K562 (cell line): ENCODE measurements at regions of chr20 and their contacts with region 1.

Region 1: GRCh38 chr20:645318-646106 is 7.5 kb downstream of the SRXN1 start:
- DNase-seq: peak; percentile 57 to 82 (median 70)
- ATAC-seq: peak; percentile 87
- H3K4me3 ChIP-seq: no peak overlapping the region
- H3K27ac ChIP-seq: peak overlapping the region; percentile 67; the same call in 2 of the 3 replicates
- H3K4me1 ChIP-seq: peaks cover 18 to 19% of the 10 kb centered on the region in 2 experiments; a peak in 4 of 5 replicates
- H3K27me3 ChIP-seq: no peaks in the 10 kb centered on the region
- CTCF ChIP-seq: peak; percentile 83 to 90 (median 87)
- EP300 ChIP-seq: no peak
- POLR2A ChIP-seq: 0 out of 2 replicates have a peak, but pooled peaks have one; percentile 37
- RAD21 ChIP-seq: peak; percentile 85 to 86

Region 2: GRCh38 chr20:555933-556526 is 89.5 kb before region 1 on chr20:
- CTCF ChIA-PET with region 1: interaction called, 17 read pairs
- POLR2A ChIA-PET with region 1: interaction called, 3 read pairs
- in situ Hi-C with region 1: loop called (anchors 5 kb)
- intact Hi-C with region 1: loop called (anchors 1 kb)
- DNase-seq: peak; percentile 40 to 75 (median 44)
- ATAC-seq: peak; percentile 83
- H3K4me3 ChIP-seq: no peak overlapping the region
- H3K27ac ChIP-seq: no peak overlapping the region
- H3K4me1 ChIP-seq: peaks cover 0 to 10% of the 10 kb centered on the region in 2 experiments; a peak in 2 of 5 replicates
- H3K27me3 ChIP-seq: no peaks in the 10 kb centered on the region
- CTCF ChIP-seq: no peak; a peak in 1 of 6 replicates
- EP300 ChIP-seq: peak; percentile 8; the same call in 1 of the 2 replicates
- POLR2A ChIP-seq: no peak
- RAD21 ChIP-seq: no peak

Region 3: DNA sequence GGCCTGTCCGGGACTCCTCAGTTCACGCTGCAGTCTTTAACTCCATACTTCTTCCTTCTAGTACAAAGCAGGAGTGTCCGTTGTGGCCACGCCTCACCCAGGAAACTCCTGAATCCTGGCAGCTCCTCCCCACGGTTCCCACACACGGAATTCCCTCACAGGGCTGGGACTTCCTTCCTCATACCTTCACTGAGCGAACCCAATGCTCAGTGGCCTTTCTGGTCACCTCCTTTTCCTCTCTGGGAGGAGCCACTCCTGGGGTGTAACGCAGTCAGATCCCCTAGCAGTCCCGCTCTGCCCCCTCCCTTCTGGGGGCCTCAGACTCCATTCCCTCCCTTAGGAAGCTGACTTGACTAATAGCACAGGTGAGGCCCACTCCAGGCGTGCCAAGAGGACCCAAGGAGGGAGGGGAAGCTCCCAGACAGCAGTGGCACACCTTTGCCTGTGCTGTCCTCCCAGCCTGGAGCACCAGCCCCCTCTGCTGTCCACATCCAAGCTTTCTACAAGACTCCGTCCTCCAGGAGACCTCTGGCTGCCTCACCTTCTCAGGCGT is 123.0 kb after region 1 on chr20 and contains the start of gene SLC52A3:
- CTCF ChIA-PET with region 1: no interaction called
- POLR2A ChIA-PET with region 1: no interaction called
- in situ Hi-C with region 1: no loop called
- intact Hi-C with region 1: no loop called
- DNase-seq: peak; percentile 45 to 62 (median 54)
- ATAC-seq: peak; percentile 96
- H3K4me3 ChIP-seq: no peak within 1 kb of the TSS
- H3K27ac ChIP-seq: no peak within 1 kb of the TSS
- H3K4me1 ChIP-seq: peaks cover 0 to 3% of the 10 kb centered on the region in 2 experiments; a peak in 4 of 5 replicates
- H3K27me3 ChIP-seq: peaks cover 0 to 7% of the 10 kb centered on the region in 2 experiments; a peak in 2 of 5 replicates
- CTCF ChIP-seq: peak; percentile 71 to 76 (median 74)
- EP300 ChIP-seq: no peak
- POLR2A ChIP-seq: no peak
- RAD21 ChIP-seq: peak; percentile 42 to 68; a peak in 3 of 4 replicates
- polyA plus RNA-seq, gene SLC52A3: 0.06 to 0.07 TPM